CD4-positive, alpha-beta T cell (primary cell): ENCODE measurements at regions of chr14 and their contacts with region 1.

Region 1: GRCh38 chr14:35404449-35405303 is at the start of gene NFKBIA:
- DNase-seq: peak; percentile 87 to 98 (median 93)
- ATAC-seq: peak; percentile 64
- H3K4me3 ChIP-seq: peak within 1 kb of the TSS; percentile 86
- H3K4me3 Mint-ChIP-seq: peak within 1 kb of the TSS; percentile 97
- H3K27ac ChIP-seq: peak within 1 kb of the TSS; percentile 98 to 100
- H3K27ac Mint-ChIP-seq: peak within 1 kb of the TSS; percentile 100
- H3K4me1 ChIP-seq: peaks cover 42% of the 10 kb centered on the region
- H3K4me1 Mint-ChIP-seq: peaks cover 62% of the 10 kb centered on the region
- H3K27me3 ChIP-seq: no peaks in the 10 kb centered on the region
- H3K27me3 Mint-ChIP-seq: no peaks in the 10 kb centered on the region
- CTCF ChIP-seq: peak; percentile 34
- total RNA-seq, gene NFKBIA: 977 to 1,030 TPM

Region 2: GRCh38 chr14:34931206-34931605 is 473.5 kb before region 1 on chr14:
- CTCF ChIA-PET with region 1: no interaction called
- POLR2A ChIA-PET with region 1: interaction called, 10 read pairs
- intact Hi-C with region 1: no loop called
- DNase-seq: peak in 12 of 14 experiments; percentile 2 to 91 (median 44)
- ATAC-seq: peak; percentile 91
- H3K4me3 ChIP-seq: peak overlapping the region; percentile 17
- H3K4me3 Mint-ChIP-seq: peak overlapping the region; percentile 26
- H3K27ac ChIP-seq: peak overlapping the region; percentile 80 to 93
- H3K27ac Mint-ChIP-seq: peak overlapping the region; percentile 90
- H3K4me1 ChIP-seq: peaks cover 24% of the 10 kb centered on the region
- H3K4me1 Mint-ChIP-seq: peaks cover 37% of the 10 kb centered on the region
- H3K27me3 ChIP-seq: no peaks in the 10 kb centered on the region
- H3K27me3 Mint-ChIP-seq: no peaks in the 10 kb centered on the region
- CTCF ChIP-seq: no peak

Region 3: DNA sequence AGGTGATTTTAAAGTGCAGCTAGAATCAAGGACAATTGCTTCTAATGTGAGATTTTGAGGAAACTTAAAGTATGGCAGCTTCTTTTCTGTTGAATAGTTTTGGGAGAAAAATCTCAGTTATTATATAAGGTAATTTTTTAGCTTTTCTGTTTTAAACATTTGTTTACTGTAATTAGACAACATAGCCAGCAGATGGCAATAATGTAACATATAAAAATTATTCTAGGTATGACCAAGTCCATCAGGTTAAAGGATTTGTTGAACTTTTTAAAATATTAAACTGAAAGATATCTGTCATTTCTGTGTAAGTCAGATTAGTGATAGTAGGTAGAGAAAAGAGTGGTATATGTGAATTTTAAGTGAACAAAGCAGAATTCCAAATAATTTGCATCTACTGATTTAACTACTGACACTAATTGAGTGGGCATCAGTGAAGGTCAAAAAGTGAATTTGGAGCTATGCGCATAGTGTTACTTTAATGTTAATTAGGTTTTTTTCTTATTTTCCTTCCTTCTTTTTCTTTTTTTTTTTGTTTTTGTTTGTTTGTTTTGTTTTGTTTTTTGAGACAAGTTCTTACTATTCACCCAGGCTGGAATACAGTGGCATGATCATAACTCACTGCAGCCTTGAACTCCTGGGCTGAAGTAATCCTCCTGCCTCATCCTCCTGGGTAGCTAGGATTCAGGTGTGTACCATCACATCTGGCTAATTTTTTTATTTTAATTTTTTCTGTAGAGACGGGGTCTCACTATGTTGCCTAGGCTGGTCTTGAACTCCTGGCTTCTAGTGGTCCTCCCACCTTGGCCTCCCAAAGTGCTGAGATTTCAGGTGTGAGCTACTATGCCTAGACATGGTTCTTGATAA is 263.7 kb before region 1 on chr14:
- CTCF ChIA-PET with region 1: interaction called, 12 read pairs
- POLR2A ChIA-PET with region 1: interaction called, 37 read pairs
- intact Hi-C with region 1: no loop called
- DNase-seq: peak in 2 of 14 experiments; percentile 33 to 55
- ATAC-seq: peak; percentile 49
- H3K4me3 ChIP-seq: no peak overlapping the region
- H3K4me3 Mint-ChIP-seq: no peak overlapping the region
- H3K27ac ChIP-seq: no peak overlapping the region
- H3K27ac Mint-ChIP-seq: peak overlapping the region; percentile 80
- H3K4me1 ChIP-seq: no peaks in the 10 kb centered on the region
- H3K4me1 Mint-ChIP-seq: peaks cover 28% of the 10 kb centered on the region
- H3K27me3 ChIP-seq: no peaks in the 10 kb centered on the region
- H3K27me3 Mint-ChIP-seq: no peaks in the 10 kb centered on the region
- CTCF ChIP-seq: peak; percentile 73

Region 4: DNA sequence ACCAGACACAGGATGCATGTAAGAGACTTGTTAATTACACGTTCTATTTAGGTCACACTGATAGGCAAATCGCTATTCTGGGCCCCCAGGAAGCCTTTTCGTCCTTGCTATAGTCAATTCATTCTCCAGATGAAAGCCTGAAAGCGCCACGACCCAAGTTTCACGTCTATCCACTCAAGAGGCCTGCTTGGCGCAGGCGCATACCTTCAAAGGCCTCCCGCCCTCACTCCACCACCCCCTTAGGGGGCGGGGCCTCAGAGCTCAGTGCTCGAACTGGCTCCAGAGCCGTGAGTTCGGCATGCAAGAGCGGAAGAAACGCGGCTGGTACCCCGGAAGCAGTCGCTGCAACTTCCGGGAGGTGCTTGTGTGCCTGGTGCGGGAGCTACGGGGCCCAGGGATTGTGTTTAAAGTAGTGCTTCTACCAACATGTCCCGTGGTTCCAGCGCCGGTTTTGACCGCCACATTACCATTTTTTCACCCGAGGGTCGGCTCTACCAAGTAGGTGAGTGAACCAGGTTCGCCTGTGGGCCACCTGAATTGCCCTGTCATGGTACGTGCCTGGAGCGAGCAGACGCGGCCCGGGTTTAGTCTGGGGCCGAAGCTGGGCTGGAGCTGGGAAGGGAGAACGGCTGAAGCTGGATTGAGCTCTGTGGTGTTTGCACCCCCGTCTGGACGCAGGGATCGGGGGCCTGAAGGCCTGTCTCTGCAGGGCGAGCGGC is 112.5 kb before region 1 on chr14 and contains the start of gene PSMA6:
- CTCF ChIA-PET with region 1: interaction called, 8 read pairs
- POLR2A ChIA-PET with region 1: interaction called, 173 read pairs
- intact Hi-C with region 1: loop called (anchors 1 to 2 kb)
- DNase-seq: peak; percentile 97 to 100 (median 99)
- ATAC-seq: peak; percentile 96
- H3K4me3 ChIP-seq: peak within 1 kb of the TSS; percentile 78
- H3K4me3 Mint-ChIP-seq: peak within 1 kb of the TSS; percentile 98
- H3K27ac ChIP-seq: peak within 1 kb of the TSS; percentile 80 to 86
- H3K27ac Mint-ChIP-seq: peak within 1 kb of the TSS; percentile 95
- H3K4me1 ChIP-seq: peaks cover 38% of the 10 kb centered on the region
- H3K4me1 Mint-ChIP-seq: peaks cover 50% of the 10 kb centered on the region
- H3K27me3 ChIP-seq: no peaks in the 10 kb centered on the region
- H3K27me3 Mint-ChIP-seq: no peaks in the 10 kb centered on the region
- CTCF ChIP-seq: no peak
- total RNA-seq, gene PSMA6: 80.8 TPM

Region 5: GRCh38 chr14:35365130-35366055 is 39.3 kb before region 1 on chr14:
- CTCF ChIA-PET with region 1: no interaction called
- POLR2A ChIA-PET with region 1: interaction called, 48 read pairs
- intact Hi-C with region 1: no loop called
- DNase-seq: peak in 8 of 14 experiments; percentile 7 to 80 (median 26)
- ATAC-seq: peak; percentile 27
- H3K4me3 ChIP-seq: no peak overlapping the region
- H3K4me3 Mint-ChIP-seq: no peak overlapping the region
- H3K27ac ChIP-seq: no peak overlapping the region
- H3K27ac Mint-ChIP-seq: no peak overlapping the region
- H3K4me1 ChIP-seq: peaks cover 26% of the 10 kb centered on the region
- H3K4me1 Mint-ChIP-seq: peaks cover 18% of the 10 kb centered on the region
- H3K27me3 ChIP-seq: no peaks in the 10 kb centered on the region
- H3K27me3 Mint-ChIP-seq: no peaks in the 10 kb centered on the region
- CTCF ChIP-seq: no peak

Region 6: GRCh38 chr14:35808076-35808652 is 403.5 kb after region 1 on chr14:
- CTCF ChIA-PET with region 1: no interaction called
- POLR2A ChIA-PET with region 1: no interaction called
- intact Hi-C with region 1: loop called in 1 of 2 experiments (anchors 5 kb)
- DNase-seq: peak in 6 of 14 experiments; percentile 15 to 53 (median 40)
- ATAC-seq: no peak
- H3K4me3 ChIP-seq: peak overlapping the region; percentile 85
- H3K4me3 Mint-ChIP-seq: peak overlapping the region; percentile 99
- H3K27ac ChIP-seq: peak overlapping the region; percentile 75 to 88
- H3K27ac Mint-ChIP-seq: peak overlapping the region; percentile 88
- H3K4me1 ChIP-seq: peaks cover 17% of the 10 kb centered on the region
- H3K4me1 Mint-ChIP-seq: peaks cover 44% of the 10 kb centered on the region
- H3K27me3 ChIP-seq: no peaks in the 10 kb centered on the region
- H3K27me3 Mint-ChIP-seq: no peaks in the 10 kb centered on the region
- CTCF ChIP-seq: no peak